IMR-90 (cell line): ENCODE measurements at regions of chr4 and their contacts with region 1.

Region 1: GRCh38 chr4:68433582-68433981 is 13.7 kb upstream of the TMPRSS11E start:
- DNase-seq: no peak
- ATAC-seq: no peak
- H3K4me3 ChIP-seq: no peak overlapping the region
- H3K27ac ChIP-seq: no peak overlapping the region
- H3K4me1 ChIP-seq: no peaks in the 10 kb centered on the region
- H3K27me3 ChIP-seq: no peaks in the 10 kb centered on the region
- CTCF ChIP-seq: no peak
- POLR2A ChIP-seq: no peak
- RAD21 ChIP-seq: no peak

Region 2: DNA sequence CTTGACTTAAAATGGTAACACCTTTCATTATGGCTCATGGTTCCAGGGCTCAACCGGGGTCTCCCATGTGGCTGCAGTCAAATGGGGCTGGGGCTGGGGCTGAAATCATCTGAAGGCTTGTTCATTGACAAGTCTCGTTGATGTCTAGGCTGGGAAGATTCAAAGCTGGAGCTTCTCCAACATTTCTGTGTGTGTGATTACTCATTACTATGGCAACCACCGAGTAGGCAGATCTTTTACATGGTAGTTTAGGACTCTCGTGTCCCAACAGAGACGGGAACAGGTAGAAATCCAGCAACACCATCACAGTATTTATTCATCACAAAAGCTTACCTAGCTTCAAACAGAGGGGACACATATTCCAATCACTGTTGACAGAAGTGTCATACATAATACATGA is 91.4 kb before region 1 on chr4:
- CTCF ChIA-PET with region 1: no interaction called
- POLR2A ChIA-PET with region 1: no interaction called
- dilution Hi-C with region 1: no loop called
- in situ Hi-C with region 1: no loop called
- intact Hi-C with region 1: no loop called
- DNase-seq: peak; percentile 73
- ATAC-seq: peak; percentile 36
- H3K4me3 ChIP-seq: no peak overlapping the region
- H3K27ac ChIP-seq: no peak overlapping the region
- H3K4me1 ChIP-seq: peaks cover 9% of the 10 kb centered on the region
- H3K27me3 ChIP-seq: no peaks in the 10 kb centered on the region
- CTCF ChIP-seq: no peak
- POLR2A ChIP-seq: no peak
- RAD21 ChIP-seq: no peak

Region 3: DNA sequence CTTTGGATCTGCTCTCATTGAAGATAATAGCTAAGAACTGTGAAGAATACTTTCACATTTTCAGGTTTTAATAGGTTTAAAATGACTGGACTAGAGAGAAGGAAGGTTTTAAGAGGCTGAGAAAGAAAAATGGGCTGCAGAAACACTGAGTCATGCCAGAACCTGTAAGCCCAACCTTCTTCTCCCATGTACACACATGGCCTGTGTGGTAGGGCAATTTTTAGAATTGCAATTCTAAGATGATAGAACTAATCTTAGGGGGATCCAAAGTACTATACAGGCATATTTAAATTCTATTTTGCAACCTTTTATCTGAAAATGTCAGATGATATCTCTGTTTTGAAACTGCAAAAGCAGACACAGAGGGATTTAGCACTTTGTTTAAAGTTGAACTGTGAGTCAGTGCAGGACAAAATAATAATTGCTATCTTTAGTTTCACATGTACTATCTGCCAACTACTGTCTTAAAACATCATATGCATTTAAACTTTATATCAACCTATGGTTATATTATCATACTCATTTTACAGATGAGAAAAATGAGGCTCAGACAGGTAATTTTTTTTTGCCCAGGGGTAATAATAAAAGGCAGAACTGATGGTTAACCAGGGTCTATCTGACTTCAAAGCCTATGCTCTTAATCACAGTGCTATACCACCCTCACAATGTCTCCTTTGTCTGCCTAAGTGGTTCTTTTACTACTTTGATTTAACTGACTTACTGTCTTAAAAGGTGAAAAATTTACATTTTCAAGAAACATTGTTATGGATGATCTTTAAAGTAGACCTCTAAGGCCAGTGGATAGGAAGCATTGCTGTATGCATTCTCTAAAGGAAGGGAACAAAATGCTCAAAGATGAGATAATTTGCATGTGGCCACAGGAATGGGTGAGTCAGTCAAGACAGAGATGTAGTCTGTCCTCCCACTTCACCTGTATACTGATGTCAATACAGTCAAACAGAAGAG is 17.9 kb after region 1 on chr4:
- CTCF ChIA-PET with region 1: no interaction called
- POLR2A ChIA-PET with region 1: interaction called, 12 read pairs
- dilution Hi-C with region 1: no loop called
- in situ Hi-C with region 1: no loop called
- intact Hi-C with region 1: no loop called
- DNase-seq: peak; percentile 4
- ATAC-seq: peak; percentile 62
- H3K4me3 ChIP-seq: no peak overlapping the region
- H3K27ac ChIP-seq: no peak overlapping the region
- H3K4me1 ChIP-seq: no peaks in the 10 kb centered on the region
- H3K27me3 ChIP-seq: no peaks in the 10 kb centered on the region; the same call in 1 of the 2 replicates
- CTCF ChIP-seq: no peak
- POLR2A ChIP-seq: no peak
- RAD21 ChIP-seq: no peak